ENCODE measurements at regions of chr14 and their contacts with region 1.

Region 1: GRCh38 chr14:31937721-31938346 is 139.3 kb upstream of the ARHGAP5 start:
- DNase-seq: peak; percentile 87
- H3K4me3 Mint-ChIP-seq: no peak overlapping the region
- H3K27ac Mint-ChIP-seq: peak overlapping the region; percentile 83
- H3K4me1 Mint-ChIP-seq: peaks cover 28% of the 10 kb centered on the region
- H3K27me3 Mint-ChIP-seq: no peaks in the 10 kb centered on the region
- CTCF ChIP-seq: no peak

Region 2: DNA sequence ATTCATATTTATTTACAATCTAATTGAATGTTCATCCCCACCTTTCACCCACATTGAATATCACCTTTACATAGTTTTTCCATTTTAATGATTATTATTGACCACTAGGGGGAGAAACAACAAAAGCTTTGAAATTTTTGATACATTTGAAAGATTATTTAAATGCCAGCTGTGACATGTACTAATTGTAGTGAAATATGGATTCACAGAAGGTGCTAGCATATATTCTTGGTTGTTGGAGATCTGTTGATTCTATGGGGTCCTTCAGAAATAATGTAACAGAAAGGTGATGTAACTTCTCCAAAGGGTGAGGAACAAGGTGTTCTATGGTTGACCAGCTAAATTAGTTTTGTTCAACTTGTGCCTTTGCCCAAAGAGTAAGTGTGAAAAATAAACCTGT is 427.6 kb before region 1 on chr14:
- CTCF ChIA-PET with region 1: interaction called, 3 read pairs
- POLR2A ChIA-PET with region 1: interaction called, 3 read pairs
- intact Hi-C with region 1: loop called (anchors 2 kb)
- DNase-seq: peak; percentile 43
- H3K4me3 Mint-ChIP-seq: no peak overlapping the region
- H3K27ac Mint-ChIP-seq: no peak overlapping the region
- H3K4me1 Mint-ChIP-seq: peaks cover 8% of the 10 kb centered on the region
- H3K27me3 Mint-ChIP-seq: no peaks in the 10 kb centered on the region
- CTCF ChIP-seq: peak; percentile 44

Region 3: DNA sequence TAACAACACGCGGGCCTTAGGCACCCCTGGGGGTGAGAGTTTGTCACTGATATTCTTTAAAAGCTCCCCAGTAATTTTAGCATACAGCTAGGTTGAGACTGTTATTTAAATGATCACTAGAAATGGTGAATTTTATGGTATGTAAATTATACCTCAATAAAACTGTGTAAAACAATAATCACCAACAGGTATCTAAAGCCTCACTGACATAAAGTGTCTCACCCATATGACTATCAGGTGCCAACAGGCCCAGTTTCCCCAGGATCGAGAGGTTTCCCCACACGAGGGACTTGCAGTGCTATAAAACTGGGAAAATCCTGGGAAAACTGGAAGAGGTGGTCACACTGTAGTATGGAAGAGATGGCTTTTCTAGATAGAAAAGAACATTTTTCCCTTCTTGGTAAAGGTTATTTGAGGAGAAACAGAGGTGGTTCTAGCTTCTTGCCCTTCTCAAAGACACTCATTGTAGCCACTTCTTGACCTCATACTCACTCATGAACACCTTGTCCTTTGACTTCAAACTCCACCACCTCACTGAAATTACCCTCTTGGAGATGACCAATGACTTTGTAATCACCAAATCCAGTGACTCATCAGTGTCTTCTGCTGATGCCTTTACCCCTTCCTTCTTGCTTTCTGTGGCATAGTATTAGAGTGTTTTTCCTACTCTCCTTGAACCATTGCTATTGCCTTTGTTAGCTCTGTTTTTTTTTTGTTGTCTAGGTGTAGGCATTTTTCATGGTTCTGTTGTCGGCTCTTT is 401.5 kb before region 1 on chr14:
- CTCF ChIA-PET with region 1: no interaction called
- POLR2A ChIA-PET with region 1: no interaction called
- intact Hi-C with region 1: no loop called
- DNase-seq: no peak
- H3K4me3 Mint-ChIP-seq: no peak overlapping the region
- H3K27ac Mint-ChIP-seq: no peak overlapping the region
- H3K4me1 Mint-ChIP-seq: peaks cover 1% of the 10 kb centered on the region
- H3K27me3 Mint-ChIP-seq: no peaks in the 10 kb centered on the region
- CTCF ChIP-seq: no peak

Region 4: GRCh38 chr14:31668348-31668747 is 269.5 kb before region 1 on chr14:
- CTCF ChIA-PET with region 1: no interaction called
- POLR2A ChIA-PET with region 1: no interaction called
- intact Hi-C with region 1: no loop called
- DNase-seq: no peak
- H3K4me3 Mint-ChIP-seq: no peak overlapping the region
- H3K27ac Mint-ChIP-seq: no peak overlapping the region
- H3K4me1 Mint-ChIP-seq: no peaks in the 10 kb centered on the region
- H3K27me3 Mint-ChIP-seq: no peaks in the 10 kb centered on the region
- CTCF ChIP-seq: no peak

Region 5: DNA sequence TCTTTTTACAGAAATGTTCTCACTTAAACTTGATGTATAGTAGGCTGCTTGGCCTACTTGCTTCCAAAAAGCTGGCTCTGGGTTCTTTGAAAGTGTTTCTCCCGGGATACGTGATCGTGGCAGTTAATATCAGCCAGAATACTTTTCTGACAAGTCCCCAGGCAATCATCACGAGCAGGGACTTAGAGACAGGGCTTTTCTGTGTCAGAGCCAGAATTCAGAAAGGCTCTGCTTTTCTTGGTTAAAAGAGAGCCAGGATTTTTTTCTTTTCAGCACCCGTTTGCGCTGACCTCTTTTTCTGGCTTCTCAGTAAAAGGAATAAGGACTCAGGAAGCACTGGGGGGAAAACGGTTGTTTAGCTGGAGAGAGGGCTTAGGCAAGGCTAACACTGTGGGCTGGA is 81.4 kb after region 1 on chr14:
- CTCF ChIA-PET with region 1: interaction called, 9 read pairs
- POLR2A ChIA-PET with region 1: interaction called, 20 read pairs
- intact Hi-C with region 1: loop called (anchors 5 kb)
- DNase-seq: no peak
- H3K4me3 Mint-ChIP-seq: no peak overlapping the region
- H3K27ac Mint-ChIP-seq: peak overlapping the region; percentile 31
- H3K4me1 Mint-ChIP-seq: peaks cover 21% of the 10 kb centered on the region
- H3K27me3 Mint-ChIP-seq: no peaks in the 10 kb centered on the region
- CTCF ChIP-seq: no peak

Region 6: DNA sequence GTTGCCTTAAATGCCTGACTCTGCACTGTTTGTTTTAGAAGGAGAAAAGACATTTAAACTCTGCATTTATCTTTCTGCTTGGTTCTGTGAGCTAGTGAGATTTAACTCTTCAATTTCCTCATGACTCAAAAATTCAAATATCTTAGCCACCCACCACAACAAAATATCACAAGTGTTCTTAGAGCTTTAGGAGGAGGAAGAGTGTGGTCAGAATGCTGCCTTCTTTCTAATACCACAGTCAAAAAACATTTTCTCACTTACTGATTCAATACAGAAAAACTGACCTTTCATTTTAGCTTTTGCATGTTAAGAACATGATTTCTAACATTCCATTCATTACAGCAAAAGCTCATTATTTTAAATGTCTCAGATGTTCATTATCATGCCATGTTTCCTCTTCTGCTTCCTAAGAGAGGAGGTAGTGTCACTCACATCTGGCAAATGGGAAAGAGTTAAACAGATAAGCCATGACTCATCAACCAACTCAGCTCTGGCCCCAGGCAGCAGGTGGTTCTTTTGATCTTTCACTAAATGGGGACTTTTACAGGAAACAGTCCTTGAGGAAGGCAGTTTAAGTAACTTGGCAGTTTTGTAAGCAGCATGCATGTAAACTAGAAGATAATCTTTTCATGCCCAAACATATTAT is 321.7 kb after region 1 on chr14:
- CTCF ChIA-PET with region 1: interaction called, 123 read pairs
- POLR2A ChIA-PET with region 1: interaction called, 6 read pairs
- intact Hi-C with region 1: no loop called
- DNase-seq: peak; percentile 73
- H3K4me3 Mint-ChIP-seq: no peak overlapping the region
- H3K27ac Mint-ChIP-seq: peak overlapping the region; percentile 14
- H3K4me1 Mint-ChIP-seq: peaks cover 11% of the 10 kb centered on the region
- H3K27me3 Mint-ChIP-seq: no peaks in the 10 kb centered on the region
- CTCF ChIP-seq: no peak

Region 7: DNA sequence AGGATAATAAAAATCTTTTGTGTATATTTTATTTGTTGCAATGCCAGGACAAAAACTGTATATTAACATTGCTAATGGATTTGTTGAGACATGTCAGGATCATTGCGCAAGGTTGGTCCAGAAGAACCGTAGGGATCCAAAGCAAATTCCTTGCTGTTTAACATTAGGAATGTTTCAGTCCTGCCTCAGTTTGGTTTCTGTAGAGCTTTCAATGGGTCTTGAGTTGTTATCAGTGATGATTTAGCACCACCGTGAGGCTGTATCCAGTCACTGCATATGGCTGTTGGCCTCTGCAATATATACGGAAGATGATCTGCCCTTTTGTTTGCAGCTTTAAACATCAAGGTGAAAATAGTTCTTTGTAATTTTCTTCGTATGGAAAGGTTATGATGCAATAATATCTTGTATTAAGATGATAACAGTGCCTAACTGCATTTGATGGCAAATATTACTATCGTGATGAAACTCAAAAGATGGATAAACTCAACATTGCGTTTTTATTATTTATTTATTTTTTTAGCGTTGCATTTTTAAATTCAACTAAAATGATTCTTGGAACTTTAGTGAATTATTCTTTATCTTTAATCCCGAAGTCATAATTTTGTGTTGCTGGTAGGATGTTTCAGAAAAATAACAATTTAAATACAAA is 622.5 kb after region 1 on chr14:
- CTCF ChIA-PET with region 1: interaction called, 12 read pairs
- POLR2A ChIA-PET with region 1: no interaction called
- intact Hi-C with region 1: loop called (anchors 1 kb)
- DNase-seq: peak; percentile 85
- H3K4me3 Mint-ChIP-seq: no peak overlapping the region
- H3K27ac Mint-ChIP-seq: no peak overlapping the region
- H3K4me1 Mint-ChIP-seq: peaks cover 10% of the 10 kb centered on the region
- H3K27me3 Mint-ChIP-seq: no peaks in the 10 kb centered on the region
- CTCF ChIP-seq: peak; percentile 77